ENCODE measurements at regions of chr6 and their contacts with region 1.

Region 1: GRCh38 chr6:30541515-30542403 is 14.5 kb downstream of the GNL1 start:
- DNase-seq: no peak
- H3K4me3 ChIP-seq: peak overlapping the region; percentile 31
- CTCF ChIP-seq: peak; percentile 90

Region 2: DNA sequence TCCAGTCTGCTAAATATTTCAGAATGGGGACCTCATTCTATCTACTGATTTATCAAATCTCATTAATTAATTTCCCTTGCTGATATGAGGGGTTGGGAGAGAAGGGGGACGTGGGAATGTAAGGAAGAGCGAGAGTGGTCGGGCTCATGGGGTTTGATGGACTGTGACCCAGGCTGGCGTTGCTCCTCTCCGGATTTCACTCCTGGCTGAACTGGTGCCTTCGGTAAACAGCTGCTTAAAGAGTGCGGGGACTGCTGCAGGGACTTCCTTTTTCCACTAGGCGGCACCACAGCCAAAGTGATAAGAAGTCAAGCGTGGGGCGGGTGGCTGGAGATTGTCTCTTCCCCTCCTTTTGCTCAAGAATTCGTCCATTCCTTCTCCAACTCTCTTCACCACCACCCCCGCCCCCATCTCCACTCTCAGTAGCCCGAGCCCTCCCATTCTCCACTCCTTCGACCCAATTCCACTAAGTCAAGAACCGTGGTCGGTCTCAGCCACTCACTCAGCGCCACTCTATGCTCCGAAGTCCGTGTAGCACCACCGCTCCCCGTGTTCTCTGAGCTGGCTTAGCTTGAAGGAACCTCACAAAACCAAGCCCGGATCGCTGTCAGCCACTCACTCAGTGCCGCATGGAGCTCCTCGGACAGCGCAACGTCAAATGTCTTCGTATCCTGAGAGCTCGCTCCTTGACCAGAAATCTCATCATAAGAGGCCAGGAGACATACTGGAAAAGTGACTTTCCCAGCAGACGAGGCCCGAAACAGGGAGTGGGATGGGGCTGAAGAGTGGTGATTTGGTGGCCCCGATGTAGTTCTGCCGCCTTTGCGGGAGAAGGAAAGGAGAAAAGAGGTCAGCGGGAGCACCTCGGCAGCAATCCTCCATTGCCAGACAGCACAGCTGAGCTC is 438.5 kb before region 1 on chr6:
- CTCF ChIA-PET with region 1: no interaction called
- POLR2A ChIA-PET with region 1: no interaction called
- DNase-seq: peak; percentile 45
- H3K4me3 ChIP-seq: peak overlapping the region; percentile 56
- CTCF ChIP-seq: peak; percentile 86

Region 3: DNA sequence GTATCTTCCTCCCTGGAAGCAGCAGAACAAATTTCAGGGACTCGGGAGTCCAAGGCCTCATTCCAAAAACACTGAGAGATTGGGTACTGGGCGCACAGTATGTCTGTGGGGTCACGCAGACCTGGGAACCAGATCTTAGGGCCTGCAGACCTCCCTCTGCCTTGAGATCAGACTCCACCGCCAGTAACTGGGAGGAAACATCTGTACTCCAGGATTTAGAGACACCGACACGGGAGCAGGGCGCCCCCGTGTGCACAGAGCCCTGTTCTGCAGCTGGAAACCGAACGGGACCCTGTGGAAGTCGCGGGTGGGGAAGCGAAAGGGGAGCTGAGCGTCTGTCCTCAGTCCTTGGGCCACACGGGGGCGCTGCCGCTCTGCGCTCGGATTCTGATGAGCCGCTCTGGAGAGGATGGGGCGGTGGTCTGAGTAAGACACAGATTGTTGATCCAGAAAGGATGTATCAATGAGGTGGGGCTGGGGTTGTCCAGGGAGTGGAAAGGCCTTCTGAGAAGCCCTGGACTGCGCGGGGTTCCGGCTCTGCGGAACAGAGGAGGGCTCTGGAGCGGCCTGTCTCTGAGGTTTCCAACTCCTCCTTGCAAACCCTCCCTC is 88.1 kb before region 1 on chr6:
- CTCF ChIA-PET with region 1: interaction called, 11 read pairs
- POLR2A ChIA-PET with region 1: no interaction called
- DNase-seq: no peak
- H3K4me3 ChIP-seq: no peak overlapping the region
- CTCF ChIP-seq: peak; percentile 93

Region 4: GRCh38 chr6:30470968-30471367 is 70.8 kb before region 1 on chr6:
- CTCF ChIA-PET with region 1: interaction called, 20 read pairs
- POLR2A ChIA-PET with region 1: no interaction called
- DNase-seq: no peak
- H3K4me3 ChIP-seq: no peak overlapping the region
- CTCF ChIP-seq: no peak

Region 5: DNA sequence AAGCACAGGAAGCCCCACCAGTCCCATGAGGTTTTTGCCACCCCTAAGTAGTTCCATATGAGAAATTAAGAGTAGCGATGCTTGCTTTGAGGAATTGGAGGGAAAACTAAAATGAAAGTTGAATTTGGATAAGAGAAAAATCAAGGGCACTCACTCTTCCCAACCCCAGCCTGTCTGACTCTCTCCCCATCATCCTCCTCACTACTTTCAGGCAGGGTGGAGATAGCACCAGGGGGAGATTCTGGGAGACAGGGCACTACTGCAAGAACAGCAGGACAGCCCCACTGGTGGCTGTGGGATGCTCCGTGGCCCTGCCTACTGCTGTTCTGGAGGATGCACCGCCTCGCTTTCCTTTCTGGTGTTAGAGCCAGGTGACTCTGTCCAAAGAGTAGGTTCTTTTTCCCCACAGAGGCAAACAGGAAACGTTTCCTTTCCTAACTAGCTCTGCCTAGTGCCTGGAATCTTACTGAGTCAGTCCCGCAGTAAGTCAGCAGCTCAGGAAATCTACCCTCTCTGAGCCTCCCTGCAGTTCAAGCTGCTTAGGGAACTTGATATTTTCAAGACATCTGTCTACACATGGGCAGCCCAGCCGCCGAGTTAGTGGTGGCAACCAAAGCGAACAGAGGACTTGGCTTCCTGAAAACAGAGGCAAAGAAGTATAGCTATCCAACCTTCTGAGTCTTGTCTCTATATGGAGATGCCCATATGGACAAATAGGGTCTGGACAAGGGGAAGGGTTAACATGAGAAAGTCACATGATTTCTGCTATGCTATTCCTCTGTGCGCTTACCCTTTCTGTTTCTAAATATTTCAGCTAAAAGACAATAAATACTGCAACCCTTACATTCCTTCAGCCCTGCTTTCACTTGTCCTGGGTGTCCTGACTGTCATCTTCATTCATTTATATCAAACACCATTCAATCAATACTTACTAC is 41.1 kb before region 1 on chr6:
- CTCF ChIA-PET with region 1: interaction called, 69 read pairs
- POLR2A ChIA-PET with region 1: interaction called, 4 read pairs
- DNase-seq: no peak
- H3K4me3 ChIP-seq: no peak overlapping the region
- CTCF ChIP-seq: no peak

Region 6: DNA sequence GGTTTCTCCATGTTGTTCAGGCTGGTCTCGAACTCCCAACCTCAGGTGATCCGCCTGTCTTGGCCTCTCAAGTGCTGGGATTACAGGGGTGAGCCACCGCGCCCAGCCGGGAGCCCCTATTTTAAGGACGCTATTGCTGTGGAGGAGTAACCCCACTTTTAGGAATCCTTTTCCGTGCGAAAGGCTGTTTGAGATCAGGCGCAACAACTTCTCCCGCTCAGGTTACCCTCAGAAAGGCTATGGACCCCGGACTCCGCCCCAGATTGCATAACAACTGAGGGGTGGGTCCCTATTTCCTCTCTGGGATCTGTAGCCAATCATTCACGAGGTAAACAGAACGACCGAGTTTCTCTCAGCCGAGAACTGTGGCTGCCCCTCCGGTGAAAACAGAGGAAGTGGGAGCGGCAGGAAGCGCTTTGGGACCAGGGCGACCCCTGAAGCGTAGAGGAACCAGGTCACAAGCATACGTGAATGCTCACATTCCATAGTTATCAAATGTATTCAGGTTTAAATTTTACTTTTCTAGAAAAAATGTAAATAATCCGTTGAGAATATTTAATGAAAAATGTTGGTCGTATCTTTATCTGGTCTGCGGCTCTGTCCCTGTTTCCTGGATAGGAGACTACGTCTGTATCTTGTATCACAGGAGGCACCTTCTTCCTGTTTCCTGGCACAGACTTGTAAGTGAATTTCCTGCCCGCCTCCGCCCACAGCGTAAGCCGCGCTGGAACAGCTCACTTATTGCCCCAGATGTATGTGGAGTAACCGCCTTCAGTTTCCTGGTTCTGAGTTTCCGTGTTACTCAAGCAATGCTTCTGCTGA is 25.6 kb before region 1 on chr6:
- CTCF ChIA-PET with region 1: interaction called, 388 read pairs
- POLR2A ChIA-PET with region 1: no interaction called
- DNase-seq: peak; percentile 59
- H3K4me3 ChIP-seq: peak overlapping the region; percentile 59
- CTCF ChIP-seq: no peak

Region 7: GRCh38 chr6:30565772-30566171 is 24.0 kb after region 1 on chr6:
- CTCF ChIA-PET with region 1: interaction called, 73 read pairs
- POLR2A ChIA-PET with region 1: no interaction called
- DNase-seq: no peak
- H3K4me3 ChIP-seq: no peak overlapping the region
- CTCF ChIP-seq: no peak

Region 8: DNA sequence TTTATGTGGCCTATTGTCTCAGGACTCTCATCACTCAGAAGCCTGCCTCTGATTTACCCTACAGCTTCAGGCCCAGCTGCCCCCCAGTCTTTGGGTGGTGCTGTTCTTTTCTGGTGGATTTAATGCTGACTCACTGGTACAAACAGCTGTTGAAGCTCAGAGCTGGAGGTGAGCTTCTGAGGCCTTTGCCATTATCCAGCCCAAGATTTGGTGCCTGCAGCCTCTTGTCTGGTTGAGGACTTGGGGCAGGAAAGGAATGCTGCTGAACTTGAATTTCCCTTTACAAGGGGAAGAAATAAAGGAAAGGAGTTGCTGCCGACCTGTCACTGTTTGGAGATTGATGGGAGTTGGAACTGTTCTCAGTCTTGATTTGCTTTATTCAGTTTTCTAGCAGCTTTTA is 49.2 kb after region 1 on chr6:
- CTCF ChIA-PET with region 1: interaction called, 20 read pairs
- POLR2A ChIA-PET with region 1: no interaction called
- DNase-seq: no peak
- H3K4me3 ChIP-seq: no peak overlapping the region
- CTCF ChIP-seq: no peak

Region 9: DNA sequence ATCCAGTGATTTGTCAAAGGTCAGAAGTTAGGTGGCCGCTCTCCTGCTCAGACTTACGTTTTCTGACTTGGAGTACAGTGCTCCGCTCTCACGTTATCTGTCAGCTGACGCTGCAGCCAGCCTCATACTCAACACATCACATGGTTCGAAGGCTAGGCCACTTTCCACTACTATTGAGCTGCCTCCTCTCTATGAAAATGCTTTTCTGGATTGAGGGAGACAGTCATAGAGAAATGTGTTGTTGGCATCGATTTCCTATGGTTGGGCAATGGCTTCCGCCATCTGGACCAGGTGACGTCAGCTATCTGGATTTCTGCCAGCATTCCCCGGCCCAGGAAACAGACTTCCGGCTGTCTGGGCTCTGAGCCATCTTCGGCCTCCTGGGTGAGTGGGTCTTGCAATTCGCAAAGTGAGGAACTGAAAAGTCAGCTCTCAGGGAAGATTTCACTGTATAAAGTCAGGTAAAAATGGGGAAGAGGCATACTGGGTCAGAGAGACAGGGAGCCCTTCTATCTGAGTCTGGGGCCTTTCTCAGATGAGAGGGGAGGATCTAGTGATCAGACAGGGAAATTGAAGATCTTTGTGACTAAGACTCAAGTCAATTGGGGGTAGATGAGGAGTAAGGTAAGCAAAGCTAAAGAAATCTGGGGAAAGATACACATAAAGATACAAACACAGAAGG is 240.1 kb after region 1 on chr6:
- CTCF ChIA-PET with region 1: no interaction called
- POLR2A ChIA-PET with region 1: no interaction called
- DNase-seq: peak; percentile 97
- H3K4me3 ChIP-seq: no peak overlapping the region
- CTCF ChIP-seq: no peak

Region 10: GRCh38 chr6:30793521-30794194 is 251.9 kb after region 1 on chr6:
- CTCF ChIA-PET with region 1: no interaction called
- POLR2A ChIA-PET with region 1: no interaction called
- DNase-seq: no peak
- H3K4me3 ChIP-seq: no peak overlapping the region
- CTCF ChIP-seq: no peak

Region 11: DNA sequence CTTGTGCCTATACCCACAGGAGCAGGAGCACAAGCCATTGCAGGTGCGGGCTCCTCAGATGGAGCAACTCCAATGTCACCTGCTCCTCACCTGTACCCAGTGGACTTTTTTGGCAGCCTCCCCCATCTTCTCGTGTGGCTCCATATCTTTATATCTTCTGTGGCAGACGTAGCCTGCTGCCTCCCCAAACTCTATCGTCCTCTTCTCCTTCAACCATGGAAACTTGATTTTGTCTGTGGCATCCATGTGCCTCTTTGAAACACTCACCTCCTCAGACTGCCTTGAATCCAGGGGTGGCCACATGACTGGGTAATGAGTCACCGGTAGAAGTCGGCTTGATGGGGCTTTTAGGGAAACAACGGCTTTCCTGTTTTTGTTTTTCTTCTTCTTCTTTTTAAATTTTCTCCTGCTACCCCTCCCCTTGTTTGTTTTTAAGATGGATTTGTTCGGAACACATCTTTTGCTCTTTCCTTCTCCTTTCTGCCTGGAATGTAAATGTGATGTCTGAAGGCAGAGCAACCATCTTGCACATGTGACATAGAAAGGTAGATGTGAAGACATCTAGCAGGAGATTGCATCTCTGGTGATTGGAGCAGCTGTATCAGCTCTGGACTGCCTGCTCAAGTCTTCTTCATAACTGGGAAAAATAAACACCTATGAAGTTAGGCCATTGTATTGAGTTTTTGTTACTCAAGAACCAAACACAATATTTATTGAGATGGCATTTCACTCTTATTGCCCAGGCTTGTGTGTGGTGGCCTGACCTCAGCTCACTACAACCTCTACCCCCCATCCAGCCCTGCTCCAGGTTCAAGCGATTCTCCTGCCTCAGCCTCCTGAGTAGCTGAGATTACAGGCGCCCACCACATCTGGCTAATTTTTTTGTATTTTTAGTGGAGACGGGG is 272.6 kb after region 1 on chr6:
- CTCF ChIA-PET with region 1: no interaction called
- POLR2A ChIA-PET with region 1: no interaction called
- DNase-seq: no peak
- H3K4me3 ChIP-seq: no peak overlapping the region
- CTCF ChIP-seq: no peak